Kidney (tissue), 22 donors: ENCODE measurements at regions of chr11 and their contacts with region 1.

Region 1: GRCh38 chr11:19903620-19904069 is 191.0 kb downstream of the NAV2 start:
- DNase-seq: peak in 4 of 5 donors; percentile 75 to 92 (median 86)
- H3K4me3 ChIP-seq: no peak overlapping the region
- H3K27ac ChIP-seq: no peak overlapping the region
- H3K4me1 ChIP-seq: no peaks in the 10 kb centered on the region
- H3K27me3 ChIP-seq: no peaks in the 10 kb centered on the region
- CTCF ChIP-seq: peak; percentile 67

Region 2: GRCh38 chr11:19561011-19561410 is 342.6 kb before region 1 on chr11:
- intact Hi-C with region 1: loop called (anchors 10 kb)
- DNase-seq: no peak
- H3K4me3 ChIP-seq: no peak overlapping the region
- H3K27ac ChIP-seq: no peak overlapping the region
- H3K4me1 ChIP-seq: peaks cover 0 to 3% (median 0%) of the 10 kb centered on the region in 3 donors
- H3K27me3 ChIP-seq: no peaks in the 10 kb centered on the region
- CTCF ChIP-seq: no peak

Region 3: GRCh38 chr11:19756675-19757475 is 146.8 kb before region 1 on chr11:
- intact Hi-C with region 1: loop called (anchors 10 kb)
- DNase-seq: no peak
- H3K4me3 ChIP-seq: no peak overlapping the region
- H3K27ac ChIP-seq: no peak overlapping the region
- H3K4me1 ChIP-seq: no peaks in the 10 kb centered on the region
- H3K27me3 ChIP-seq: peaks cover 3% of the 10 kb centered on the region
- CTCF ChIP-seq: no peak